ENCODE measurements at regions of chr2 and their contacts with region 1.

Region 1: DNA sequence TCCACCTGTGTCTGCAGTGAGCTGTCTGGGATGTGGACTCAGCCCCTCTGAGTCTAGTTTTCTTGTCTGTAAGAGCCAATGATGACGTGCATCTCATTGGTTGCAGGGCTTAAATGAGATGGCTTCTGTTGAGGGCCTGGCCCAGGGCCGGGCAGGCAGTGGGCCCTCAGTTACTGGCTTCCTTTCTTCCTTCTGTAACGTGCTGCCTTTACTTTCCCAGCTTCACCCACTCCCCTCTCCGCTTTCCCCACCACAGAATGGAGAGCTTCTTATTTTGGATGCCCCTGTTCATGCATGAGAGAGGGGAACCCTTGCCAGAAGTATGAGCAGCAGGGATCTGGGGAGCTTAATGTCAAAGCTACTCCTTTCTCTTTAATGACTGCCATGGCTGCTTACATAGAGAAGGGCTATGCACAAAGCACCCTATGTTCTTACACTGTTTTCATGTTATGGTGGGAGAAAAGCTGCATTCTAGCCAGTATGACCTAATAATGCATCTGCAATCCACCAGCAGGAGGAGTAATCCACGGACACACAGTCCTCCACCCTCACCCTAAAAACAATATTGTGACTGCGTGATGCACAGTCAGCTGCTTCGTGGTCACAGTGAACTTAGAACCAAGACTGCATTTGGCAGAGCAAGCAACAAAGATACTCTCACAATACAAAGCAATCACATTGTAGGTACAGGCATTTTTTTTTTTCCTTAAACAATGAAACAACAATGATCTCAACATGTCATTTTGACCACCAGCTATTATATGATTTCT is 37.2 kb downstream of the CREG2 start:
- H3K4me3 Mint-ChIP-seq: no peak overlapping the region
- H3K27ac Mint-ChIP-seq: no peak overlapping the region
- H3K4me1 Mint-ChIP-seq: peaks cover 15% of the 10 kb centered on the region
- H3K27me3 Mint-ChIP-seq: peaks cover 2% of the 10 kb centered on the region

Region 2: GRCh38 chr2:101387151-101387807 is 37.2 kb after region 1 on chr2 and contains the start of gene CREG2:
- intact Hi-C with region 1: loop called (anchors 1 kb)
- H3K4me3 Mint-ChIP-seq: peak within 1 kb of the TSS; percentile 76
- H3K27ac Mint-ChIP-seq: no peak within 1 kb of the TSS
- H3K4me1 Mint-ChIP-seq: peaks cover 12% of the 10 kb centered on the region
- H3K27me3 Mint-ChIP-seq: peaks cover 65% of the 10 kb centered on the region

Measured in dendritic cell treated with granulocyte-macrophage colony-stimulating factor and Interleukin-4, amounts not matched to agents 40 ng/mL and 50 ng/mL, for 4 days (primary cell).